Heart left ventricle (tissue), 16 donors: ENCODE measurements at regions of chr11 and their contacts with region 1.

Region 1: GRCh38 chr11:10808553-10809372 is at the start of gene EIF4G2:
- DNase-seq: peak; percentile 99
- ATAC-seq: peak; percentile 95 to 98 (median 98)
- H3K4me3 ChIP-seq: peak within 1 kb of the TSS; percentile 61 to 99 (median 93)
- H3K27ac ChIP-seq: peak within 1 kb of the TSS; percentile 94 to 100 (median 98)
- H3K4me1 ChIP-seq: peaks cover 15 to 46% (median 40%) of the 10 kb centered on the region in 12 donors
- H3K27me3 ChIP-seq: no peaks in the 10 kb centered on the region
- CTCF ChIP-seq: peak in 2 of 12 donors; percentile 12 to 25
- POLR2A ChIP-seq: peak; percentile 82 to 99
- total RNA-seq, gene EIF4G2: 473 to 1,111 (median 849) TPM

Region 2: DNA sequence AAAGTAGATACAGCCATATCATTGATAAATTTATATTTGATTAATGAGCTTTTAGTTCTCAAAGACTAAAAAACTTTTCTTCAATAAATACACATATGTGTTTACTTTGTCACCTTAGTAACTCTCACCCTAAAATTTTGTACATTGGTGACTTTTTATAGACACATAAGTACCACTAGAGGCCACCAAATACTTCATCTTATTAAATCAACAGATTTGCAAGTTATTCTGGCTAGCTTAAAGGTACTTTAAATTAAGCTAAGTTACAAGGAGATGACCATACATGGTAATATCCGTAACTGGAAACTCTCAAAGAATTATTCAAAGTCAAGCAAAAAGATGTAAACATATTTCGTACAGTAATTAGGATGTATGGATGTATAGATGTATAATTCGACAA is 627.0 kb before region 1 on chr11:
- intact Hi-C with region 1: loop called in 1 of 10 experiments (anchors 5 kb)
- DNase-seq: no peak
- ATAC-seq: no peak
- H3K4me3 ChIP-seq: no peak overlapping the region
- H3K27ac ChIP-seq: no peak overlapping the region
- H3K4me1 ChIP-seq: peaks cover 0 to 5% (median 0%) of the 10 kb centered on the region in 12 donors
- H3K27me3 ChIP-seq: no peaks in the 10 kb centered on the region
- CTCF ChIP-seq: peak in 5 of 12 donors; percentile 8 to 37 (median 21)
- POLR2A ChIP-seq: no peak

Region 3: DNA sequence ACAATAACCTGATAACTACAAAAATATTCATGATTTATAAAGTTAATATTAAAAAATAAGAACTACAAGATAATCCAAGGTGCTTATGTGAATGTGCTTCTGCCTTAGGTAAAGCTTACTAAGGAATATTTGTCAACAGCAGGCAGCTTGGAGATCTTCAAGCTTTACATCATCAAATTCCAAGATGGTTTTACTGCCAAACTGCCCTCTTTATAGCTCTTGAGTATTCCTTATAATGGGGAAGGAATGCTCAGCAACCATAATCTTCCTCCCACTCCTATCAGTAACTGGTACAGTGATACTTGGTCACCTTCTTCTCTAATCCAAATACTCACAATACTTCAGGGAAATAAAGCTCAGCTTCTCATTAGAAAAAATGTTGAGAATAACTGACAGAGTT is 544.8 kb before region 1 on chr11:
- intact Hi-C with region 1: no loop called
- DNase-seq: no peak
- ATAC-seq: no peak
- H3K4me3 ChIP-seq: no peak overlapping the region
- H3K27ac ChIP-seq: no peak overlapping the region
- H3K4me1 ChIP-seq: peaks cover 0 to 15% (median 0%) of the 10 kb centered on the region in 12 donors
- H3K27me3 ChIP-seq: no peaks in the 10 kb centered on the region
- CTCF ChIP-seq: no peak
- POLR2A ChIP-seq: no peak

Region 4: DNA sequence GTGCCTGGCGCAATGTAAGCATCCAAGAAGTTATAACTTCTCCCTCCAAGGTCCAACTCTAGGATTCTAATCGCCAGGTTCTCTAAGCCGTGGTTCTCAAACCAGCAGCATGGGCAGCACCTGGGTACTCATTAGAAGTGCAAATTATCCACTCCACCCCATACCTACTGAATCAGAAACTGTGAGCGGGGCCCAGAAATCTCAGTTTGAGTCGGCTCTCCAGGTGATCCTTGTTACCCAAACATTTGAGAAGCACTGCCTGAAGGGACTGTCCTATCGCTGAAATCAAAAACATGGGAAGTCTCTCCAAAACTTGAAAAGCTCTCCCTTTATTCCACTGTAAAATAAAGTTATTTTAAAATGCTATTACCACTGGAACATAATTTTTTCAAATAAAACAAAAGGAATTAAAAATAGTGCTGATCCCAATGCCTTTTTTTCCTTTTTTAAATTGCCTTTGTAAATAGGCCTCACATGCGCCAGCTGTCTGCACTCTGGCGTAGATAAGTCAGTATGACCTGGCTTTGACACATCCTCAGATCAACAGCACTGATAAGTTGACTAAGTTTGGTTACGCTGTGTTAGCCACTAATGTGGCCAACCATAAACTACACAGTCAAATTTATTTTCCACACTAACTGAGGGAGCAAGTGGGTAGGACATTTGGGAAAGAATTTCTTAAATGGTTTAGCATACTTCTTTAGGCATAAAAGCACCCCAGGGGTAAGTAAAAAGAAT is 66.1 kb before region 1 on chr11:
- intact Hi-C with region 1: no loop called
- DNase-seq: no peak
- ATAC-seq: no peak
- H3K4me3 ChIP-seq: no peak overlapping the region
- H3K27ac ChIP-seq: no peak overlapping the region
- H3K4me1 ChIP-seq: peaks cover 0 to 15% (median 0%) of the 10 kb centered on the region in 12 donors
- H3K27me3 ChIP-seq: no peaks in the 10 kb centered on the region
- CTCF ChIP-seq: no peak
- POLR2A ChIP-seq: no peak

Region 5: DNA sequence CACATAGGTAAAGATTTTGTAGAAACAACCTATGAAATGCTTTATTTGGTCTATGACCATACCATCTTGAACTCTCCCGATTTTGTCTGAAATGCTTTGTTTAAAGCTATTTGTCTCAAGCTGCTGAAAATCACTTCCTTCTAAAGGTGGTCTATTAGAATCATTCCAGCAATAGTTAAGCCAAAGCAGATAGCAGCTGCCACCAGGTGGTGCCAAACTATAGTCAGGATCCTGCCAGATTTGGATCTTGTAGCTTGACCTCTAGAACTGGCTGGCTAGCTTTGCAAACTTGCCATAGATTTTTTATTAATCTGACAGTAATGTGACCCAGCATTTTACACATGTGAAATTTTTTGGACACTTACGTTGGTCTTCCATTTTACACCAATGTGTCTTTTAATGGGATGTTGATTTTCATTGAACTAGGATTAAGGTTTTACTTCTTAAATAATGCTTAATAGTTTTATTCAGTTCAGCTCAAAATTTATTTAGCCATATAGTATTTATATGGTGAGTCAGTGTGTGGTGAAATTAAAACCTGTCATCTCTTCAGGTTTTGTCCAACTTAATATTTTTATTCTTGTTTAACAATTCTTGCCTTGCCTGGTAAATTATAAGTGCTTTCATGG is 38.0 kb before region 1 on chr11:
- intact Hi-C with region 1: loop called in 1 of 10 experiments (anchors 5 kb)
- DNase-seq: peak in 4 of 5 donors; percentile 46 to 59 (median 55)
- ATAC-seq: peak; percentile 54 to 77 (median 68)
- H3K4me3 ChIP-seq: no peak overlapping the region
- H3K27ac ChIP-seq: peak overlapping the region in 10 of 12 donors; percentile 4 to 85 (median 60)
- H3K4me1 ChIP-seq: peaks cover 0 to 21% (median 9%) of the 10 kb centered on the region in 12 donors
- H3K27me3 ChIP-seq: no peaks in the 10 kb centered on the region
- CTCF ChIP-seq: peak; percentile 55 to 81 (median 70)
- POLR2A ChIP-seq: no peak

Region 6: GRCh38 chr11:10857709-10858438 is 49.1 kb after region 1 on chr11 and contains the start of gene ZBED5:
- intact Hi-C with region 1: loop called (anchors 1 to 5 kb)
- DNase-seq: peak; percentile 97 to 98 (median 98)
- ATAC-seq: peak; percentile 96 to 98 (median 97)
- H3K4me3 ChIP-seq: peak within 1 kb of the TSS; percentile 62 to 89 (median 80)
- H3K27ac ChIP-seq: peak within 1 kb of the TSS; percentile 93 to 99 (median 96)
- H3K4me1 ChIP-seq: peaks cover 0 to 61% (median 23%) of the 10 kb centered on the region in 12 donors
- H3K27me3 ChIP-seq: no peaks in the 10 kb centered on the region
- CTCF ChIP-seq: peak in 4 of 12 donors; percentile 31 to 42 (median 38)
- POLR2A ChIP-seq: peak in 1 of 2 donors; percentile 98
- total RNA-seq, gene ZBED5: 26.3 to 49.1 (median 38.9) TPM

Region 7: GRCh38 chr11:10906513-10906912 is 97.8 kb after region 1 on chr11:
- intact Hi-C with region 1: loop called in 9 of 10 experiments (anchors 5 to 10 kb)
- DNase-seq: no peak
- ATAC-seq: peak in 3 of 4 donors; percentile 35 to 60 (median 40)
- H3K4me3 ChIP-seq: no peak overlapping the region
- H3K27ac ChIP-seq: no peak overlapping the region
- H3K4me1 ChIP-seq: peaks cover 0 to 22% (median 3%) of the 10 kb centered on the region in 12 donors
- H3K27me3 ChIP-seq: no peaks in the 10 kb centered on the region
- CTCF ChIP-seq: peak in 9 of 12 donors; percentile 7 to 47 (median 26)
- POLR2A ChIP-seq: no peak

Region 8: GRCh38 chr11:10933455-10934292 is 124.9 kb after region 1 on chr11:
- intact Hi-C with region 1: loop called in 6 of 10 experiments (anchors 1 to 5 kb)
- DNase-seq: peak; percentile 88 to 93 (median 91)
- ATAC-seq: peak; percentile 83 to 95 (median 92)
- H3K4me3 ChIP-seq: peak overlapping the region in 11 of 12 donors; percentile 27 to 60 (median 50)
- H3K27ac ChIP-seq: peak overlapping the region in 11 of 12 donors; percentile 30 to 84 (median 73)
- H3K4me1 ChIP-seq: peaks cover 0 to 24% (median 6%) of the 10 kb centered on the region in 12 donors
- H3K27me3 ChIP-seq: peaks cover 0 to 12% (median 0%) of the 10 kb centered on the region in 9 donors
- CTCF ChIP-seq: peak; percentile 88 to 99 (median 96)
- POLR2A ChIP-seq: peak in 1 of 2 donors; percentile 30

Region 9: GRCh38 chr11:11531131-11531908 is 722.6 kb after region 1 on chr11:
- intact Hi-C with region 1: no loop called
- DNase-seq: peak in 2 of 5 donors; percentile 38 to 45
- ATAC-seq: peak; percentile 27 to 44 (median 38)
- H3K4me3 ChIP-seq: no peak overlapping the region
- H3K27ac ChIP-seq: peak overlapping the region in 3 of 12 donors; percentile 10 to 46 (median 39)
- H3K4me1 ChIP-seq: peaks cover 8 to 78% (median 54%) of the 10 kb centered on the region in 12 donors
- H3K27me3 ChIP-seq: no peaks in the 10 kb centered on the region
- CTCF ChIP-seq: peak in 2 of 12 donors; percentile 8 to 35
- POLR2A ChIP-seq: no peak